Dendritic cell treated with granulocyte-macrophage colony-stimulating factor and Interleukin-4, amounts not matched to agents 40 ng/mL and 50 ng/mL, for 4 days (primary cell): ENCODE measurements at regions of chr1 and their contacts with region 1.

Region 1: DNA sequence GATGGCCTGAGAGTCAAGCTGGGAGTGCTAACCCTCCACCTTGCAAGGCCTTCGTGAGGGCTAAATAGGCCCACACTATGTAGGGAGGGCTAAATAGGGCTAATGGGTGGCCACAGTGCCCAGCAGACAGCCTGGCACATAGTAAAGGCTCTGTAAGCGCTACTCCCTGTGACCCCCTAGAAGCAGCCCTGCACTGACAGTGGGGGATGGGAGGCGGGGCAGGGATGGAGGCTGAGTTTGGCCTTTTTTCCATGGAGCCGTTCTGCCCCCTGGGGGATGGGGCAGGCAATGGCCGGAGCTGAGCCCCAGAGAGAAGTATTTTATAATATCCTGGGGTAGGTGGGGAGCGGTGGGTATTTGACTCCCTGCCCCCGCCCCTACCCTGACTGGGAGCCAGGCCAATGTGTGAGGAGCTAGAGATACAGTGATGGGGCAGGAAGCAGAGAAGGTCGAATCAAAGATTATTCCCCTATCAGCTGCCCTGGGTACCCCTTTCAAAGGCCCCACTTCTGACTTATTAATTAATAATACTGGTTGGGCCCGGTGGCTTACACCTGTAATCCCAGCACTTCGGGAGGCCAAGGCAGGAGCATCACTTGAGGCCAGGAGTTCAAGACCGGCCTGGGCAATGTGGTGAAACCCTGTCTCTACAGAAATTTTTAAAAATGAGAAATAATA is 42.3 kb downstream of the LACTBL1 start:
- H3K4me3 Mint-ChIP-seq: no peak overlapping the region
- H3K27ac Mint-ChIP-seq: no peak overlapping the region
- H3K4me1 Mint-ChIP-seq: no peaks in the 10 kb centered on the region
- H3K27me3 Mint-ChIP-seq: peaks cover 20% of the 10 kb centered on the region

Region 2: DNA sequence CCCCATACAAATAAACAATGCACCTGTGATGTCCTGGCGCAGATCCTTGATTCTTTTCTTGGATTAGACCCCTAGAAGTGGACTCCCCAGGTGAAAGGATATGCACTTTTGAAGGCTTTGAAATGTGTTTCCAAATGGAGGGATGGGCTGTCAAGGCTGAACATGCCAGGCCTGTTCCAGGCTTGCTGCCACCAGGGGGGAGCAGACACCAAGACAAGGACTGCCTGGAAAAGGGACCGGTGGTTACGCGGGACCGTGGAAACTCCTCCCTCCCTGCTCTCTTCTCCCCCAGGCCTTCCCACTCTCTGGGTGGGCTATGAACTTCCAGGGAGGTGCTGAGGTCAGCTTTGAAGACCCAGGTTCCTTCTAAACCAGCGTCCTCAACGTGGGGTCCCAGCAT is 264.6 kb before region 1 on chr1:
- intact Hi-C with region 1: loop called (anchors 2 kb)
- H3K4me3 Mint-ChIP-seq: no peak overlapping the region
- H3K27ac Mint-ChIP-seq: no peak overlapping the region
- H3K4me1 Mint-ChIP-seq: peaks cover 6% of the 10 kb centered on the region
- H3K27me3 Mint-ChIP-seq: peaks cover 16% of the 10 kb centered on the region

Region 3: GRCh38 chr1:22673486-22674409 is 256.6 kb before region 1 on chr1:
- intact Hi-C with region 1: loop called (anchors 2 kb)
- H3K4me3 Mint-ChIP-seq: no peak overlapping the region
- H3K27ac Mint-ChIP-seq: no peak overlapping the region
- H3K4me1 Mint-ChIP-seq: peaks cover 4% of the 10 kb centered on the region
- H3K27me3 Mint-ChIP-seq: peaks cover 36% of the 10 kb centered on the region

Region 4: GRCh38 chr1:22892789-22893188 is 37.6 kb before region 1 on chr1:
- intact Hi-C with region 1: no loop called
- H3K4me3 Mint-ChIP-seq: no peak overlapping the region
- H3K27ac Mint-ChIP-seq: no peak overlapping the region
- H3K4me1 Mint-ChIP-seq: peaks cover 8% of the 10 kb centered on the region
- H3K27me3 Mint-ChIP-seq: peaks cover 7% of the 10 kb centered on the region

Region 5: DNA sequence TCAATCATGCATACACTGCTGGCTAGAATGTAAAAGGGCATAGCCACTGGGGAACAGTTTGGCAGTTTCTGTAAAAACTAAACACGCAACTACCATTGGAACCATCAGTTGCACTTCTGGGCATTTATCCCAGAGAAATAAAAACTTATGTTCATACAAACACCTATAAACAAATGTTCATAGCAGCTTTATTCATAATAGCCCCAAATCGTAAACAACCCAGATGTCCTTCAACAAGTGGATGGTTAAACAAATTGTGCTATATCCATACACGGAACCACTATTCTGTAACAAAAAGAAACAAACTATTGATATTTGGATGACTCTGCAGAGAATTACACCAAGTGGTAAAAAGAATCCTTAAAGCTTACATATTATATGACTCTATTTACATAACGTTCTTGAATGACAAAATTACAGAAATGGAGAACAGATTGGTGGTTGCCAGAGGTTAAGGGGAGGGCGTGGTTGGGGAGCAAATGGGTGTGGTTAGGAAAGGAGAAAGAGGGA is 19.5 kb after region 1 on chr1:
- intact Hi-C with region 1: no loop called
- H3K4me3 Mint-ChIP-seq: no peak overlapping the region
- H3K27ac Mint-ChIP-seq: no peak overlapping the region
- H3K4me1 Mint-ChIP-seq: no peaks in the 10 kb centered on the region
- H3K27me3 Mint-ChIP-seq: peaks cover 59% of the 10 kb centered on the region